ENCODE measurements at regions of chr9 and their contacts with region 1.

Region 1: DNA sequence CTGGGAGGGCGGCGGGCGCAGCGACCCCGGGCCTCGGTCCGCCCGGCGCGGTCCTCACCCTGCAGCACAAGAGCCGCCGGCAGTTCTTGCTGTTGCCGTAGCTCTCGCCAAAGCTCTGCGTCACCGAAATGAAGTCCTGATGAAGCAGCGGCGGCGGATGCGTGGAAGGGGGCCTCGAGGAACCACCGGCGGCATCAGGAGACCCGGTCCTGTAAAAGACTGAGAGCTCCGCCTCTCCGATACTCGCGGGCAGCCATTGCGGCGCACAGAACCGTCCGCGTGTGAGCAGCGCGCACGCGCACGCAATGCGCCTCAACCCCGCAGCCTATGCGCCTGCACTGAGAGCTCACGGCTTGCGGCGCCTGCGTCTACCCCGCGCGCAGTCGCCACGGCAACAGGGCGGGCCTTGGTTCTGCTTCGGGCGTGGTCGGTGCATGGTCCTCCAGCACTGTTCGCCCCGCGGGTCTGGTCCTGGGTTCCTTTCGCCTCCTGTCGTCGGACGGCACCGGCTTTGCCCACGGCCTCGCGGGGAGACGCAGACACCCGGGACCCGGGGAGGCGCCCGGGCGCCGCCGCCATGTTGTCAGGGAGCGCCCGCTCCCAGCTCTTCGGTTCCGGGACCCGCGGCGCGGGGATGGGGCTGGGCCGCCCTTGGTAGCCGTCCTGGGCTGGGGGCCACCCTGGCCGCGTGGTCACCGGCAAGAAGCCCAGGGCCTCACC is 9.3 kb upstream of the GRIN1 start:
- DNase-seq: peak; percentile 94
- ATAC-seq: peak; percentile 93
- H3K4me3 ChIP-seq: peak overlapping the region; percentile 8 to 82 (median 73)
- H3K4me3 Mint-ChIP-seq: peak overlapping the region; percentile 89
- H3K27ac ChIP-seq: peak overlapping the region; percentile 71 to 93
- H3K27ac Mint-ChIP-seq: peak overlapping the region; percentile 91
- H3K4me1 ChIP-seq: peaks cover 28 to 32% of the 10 kb centered on the region in 2 donors
- H3K4me1 Mint-ChIP-seq: peaks cover 31% of the 10 kb centered on the region
- H3K27me3 ChIP-seq: peaks cover 0 to 3% (median 0%) of the 10 kb centered on the region in 4 experiments
- H3K27me3 Mint-ChIP-seq: peaks cover 4% of the 10 kb centered on the region
- CTCF ChIP-seq: no peak

Region 2: DNA sequence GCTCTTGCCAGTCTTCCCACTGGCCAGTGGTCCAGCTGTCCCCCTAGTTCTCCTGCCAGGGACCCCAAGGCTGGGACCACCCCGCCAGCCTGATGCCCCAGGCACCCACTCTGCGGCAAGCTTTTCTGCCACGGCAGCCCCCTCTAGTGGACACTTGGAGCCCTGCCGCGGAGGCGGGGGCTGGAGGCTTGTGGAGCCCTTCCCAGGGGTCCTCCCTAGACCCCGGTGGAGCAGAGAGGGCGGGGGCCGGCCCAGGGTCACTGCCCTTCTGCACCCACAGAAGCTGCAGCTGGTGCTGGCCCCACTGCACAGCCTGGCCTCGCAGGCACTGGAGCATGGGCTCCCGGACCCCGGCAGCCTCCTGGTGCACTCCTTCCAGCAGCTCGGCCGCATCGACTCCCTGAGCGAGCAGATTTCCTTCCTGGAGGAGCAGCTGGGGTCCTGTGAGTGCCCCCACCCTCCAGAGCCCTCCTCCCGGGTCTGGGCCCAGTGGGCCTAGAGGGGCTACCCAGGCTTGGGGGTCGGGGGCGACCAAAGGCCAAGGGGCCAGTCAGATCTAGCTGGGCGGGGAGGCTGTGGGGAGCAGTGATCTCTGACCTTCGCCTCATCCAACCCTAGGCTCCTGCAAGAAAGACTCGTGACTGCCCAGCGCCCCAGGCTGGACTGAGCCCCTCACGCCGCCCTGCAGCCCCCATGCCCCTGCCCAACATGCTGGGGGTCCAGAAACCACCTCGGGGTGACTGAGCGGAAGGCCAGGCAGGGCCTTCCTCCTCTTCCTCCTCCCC is 457.8 kb before region 1 on chr9:
- CTCF ChIA-PET with region 1: no interaction called
- POLR2A ChIA-PET with region 1: interaction called, 19 read pairs
- intact Hi-C with region 1: no loop called
- DNase-seq: peak; percentile 60
- ATAC-seq: peak; percentile 52
- H3K4me3 ChIP-seq: no peak overlapping the region
- H3K4me3 Mint-ChIP-seq: no peak overlapping the region
- H3K27ac ChIP-seq: no peak overlapping the region
- H3K27ac Mint-ChIP-seq: no peak overlapping the region
- H3K4me1 ChIP-seq: peaks cover 0 to 5% of the 10 kb centered on the region in 2 donors
- H3K4me1 Mint-ChIP-seq: peaks cover 3% of the 10 kb centered on the region
- H3K27me3 ChIP-seq: peaks cover 0 to 15% (median 5%) of the 10 kb centered on the region in 4 experiments
- H3K27me3 Mint-ChIP-seq: peaks cover 5% of the 10 kb centered on the region
- CTCF ChIP-seq: peak; percentile 85

Region 3: GRCh38 chr9:137086531-137087408 is 42.8 kb before region 1 on chr9 and contains the start of gene MAN1B1:
- CTCF ChIA-PET with region 1: interaction called, 4 read pairs
- POLR2A ChIA-PET with region 1: interaction called, 3 read pairs
- intact Hi-C with region 1: loop called (anchors 5 kb)
- DNase-seq: peak; percentile 100
- ATAC-seq: peak; percentile 79
- H3K4me3 ChIP-seq: peak within 1 kb of the TSS; percentile 42 to 83 (median 74)
- H3K4me3 Mint-ChIP-seq: peak within 1 kb of the TSS; percentile 97
- H3K27ac ChIP-seq: peak within 1 kb of the TSS; percentile 88 to 97
- H3K27ac Mint-ChIP-seq: peak within 1 kb of the TSS; percentile 98
- H3K4me1 ChIP-seq: peaks cover 18 to 41% of the 10 kb centered on the region in 2 donors
- H3K4me1 Mint-ChIP-seq: peaks cover 40% of the 10 kb centered on the region
- H3K27me3 ChIP-seq: no peaks in the 10 kb centered on the region
- H3K27me3 Mint-ChIP-seq: no peaks in the 10 kb centered on the region
- CTCF ChIP-seq: no peak
- total RNA-seq, gene MAN1B1: 68.4 and 80.9 TPM in 2 replicates

Region 4: DNA sequence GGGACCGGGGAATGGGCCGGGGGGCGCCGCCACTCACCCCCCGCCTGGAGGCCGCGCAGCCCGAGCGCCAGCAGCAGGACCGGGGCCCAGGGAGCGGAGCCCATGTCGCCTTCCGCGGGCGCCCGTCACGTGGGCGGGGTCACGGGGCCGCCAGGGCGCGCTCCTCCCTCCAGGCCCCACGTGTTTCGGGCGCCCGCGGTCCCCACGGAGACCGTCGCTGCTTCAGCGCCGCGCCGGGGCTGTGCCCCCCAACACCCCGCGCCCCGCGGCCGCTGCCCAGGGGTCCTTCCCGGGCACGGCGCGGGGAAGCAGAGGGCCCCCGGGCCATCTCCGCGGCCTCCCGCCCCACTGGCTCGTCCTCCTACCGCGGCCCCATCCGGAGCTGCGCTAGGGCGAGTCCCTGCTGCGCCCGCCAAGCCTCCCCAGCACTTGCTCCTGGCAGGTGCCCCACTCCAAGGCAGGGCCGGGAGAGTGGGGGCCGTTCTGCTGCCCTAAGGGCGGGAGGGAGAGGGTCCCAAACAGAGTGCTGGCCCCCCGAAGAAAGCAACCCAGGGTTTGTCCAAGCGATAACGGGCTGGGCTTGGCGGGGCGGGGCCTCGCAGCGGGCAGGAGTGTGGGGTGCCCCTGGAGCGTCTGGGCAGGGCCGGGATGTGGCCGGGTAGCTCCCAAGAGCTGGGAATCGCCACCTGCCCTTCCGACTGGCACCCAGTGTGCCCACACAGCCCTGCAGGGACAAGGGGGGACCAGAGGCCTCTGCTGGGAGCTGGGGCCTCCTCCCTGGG is 14.8 kb before region 1 on chr9 and contains the start of gene DPP7:
- CTCF ChIA-PET with region 1: interaction called, 10 read pairs
- POLR2A ChIA-PET with region 1: interaction called, 5 read pairs
- intact Hi-C with region 1: no loop called
- DNase-seq: peak; percentile 90
- ATAC-seq: peak; percentile 90
- H3K4me3 ChIP-seq: peak within 1 kb of the TSS; percentile 11 to 79 (median 60)
- H3K4me3 Mint-ChIP-seq: peak within 1 kb of the TSS; percentile 81
- H3K27ac ChIP-seq: peak within 1 kb of the TSS; percentile 55 to 83
- H3K27ac Mint-ChIP-seq: peak within 1 kb of the TSS; percentile 50
- H3K4me1 ChIP-seq: peaks cover 17 to 28% of the 10 kb centered on the region in 2 donors
- H3K4me1 Mint-ChIP-seq: peaks cover 20% of the 10 kb centered on the region
- H3K27me3 ChIP-seq: no peaks in the 10 kb centered on the region
- H3K27me3 Mint-ChIP-seq: no peaks in the 10 kb centered on the region
- CTCF ChIP-seq: no peak
- total RNA-seq, gene DPP7: 324 and 335 TPM in 2 replicates

Region 5: DNA sequence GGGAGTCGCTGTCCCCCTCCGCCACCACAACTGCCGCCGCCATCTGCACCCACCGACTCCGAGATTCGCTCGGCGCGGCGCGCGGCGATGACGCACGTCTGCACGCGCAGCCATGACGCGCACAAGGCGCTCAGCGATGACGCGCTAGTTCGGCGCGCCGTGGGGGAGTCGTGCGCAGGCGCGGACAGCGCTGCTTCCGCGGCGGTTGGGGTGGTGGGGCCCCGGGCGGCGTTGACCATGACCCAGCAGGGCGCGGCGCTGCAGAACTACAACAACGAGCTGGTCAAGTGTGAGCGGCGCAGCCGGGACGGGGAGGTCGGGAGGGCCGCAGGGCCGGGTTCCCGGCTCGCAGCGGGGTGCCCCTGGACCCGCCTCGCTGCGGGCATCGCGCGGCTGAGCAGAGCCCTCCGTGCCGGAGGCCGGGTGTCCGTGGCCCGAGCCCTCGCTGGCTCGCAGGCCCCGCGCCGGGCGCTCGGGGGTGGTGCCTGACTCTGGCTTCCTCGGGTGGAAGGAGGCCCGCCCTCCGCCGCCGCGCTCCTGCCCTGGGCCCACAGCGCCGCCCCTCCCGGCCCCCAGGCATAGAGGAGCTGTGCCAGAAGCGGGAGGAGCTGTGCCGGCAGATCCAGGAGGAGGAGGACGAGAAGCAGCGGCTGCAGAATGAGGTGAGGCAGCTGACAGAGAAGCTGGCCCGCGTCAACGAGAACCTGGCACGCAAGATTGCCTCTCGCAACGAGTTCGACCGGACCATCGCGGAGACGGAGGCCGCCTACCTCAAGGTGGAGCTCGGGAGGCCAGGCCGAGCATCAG is 59.1 kb after region 1 on chr9 and contains the starts of genes ANAPC2 and SSNA1:
- CTCF ChIA-PET with region 1: interaction called, 3 read pairs
- POLR2A ChIA-PET with region 1: interaction called, 21 read pairs
- intact Hi-C with region 1: loop called (anchors 5 kb)
- DNase-seq: peak; percentile 97
- ATAC-seq: peak; percentile 84
- H3K4me3 ChIP-seq: peak within 1 kb of the TSS; percentile 50 to 99 (median 98)
- H3K4me3 Mint-ChIP-seq: peak within 1 kb of the TSS; percentile 96
- H3K27ac ChIP-seq: peak within 1 kb of the TSS; percentile 78 to 90
- H3K27ac Mint-ChIP-seq: peak within 1 kb of the TSS; percentile 97
- H3K4me1 ChIP-seq: peaks cover 26 to 40% of the 10 kb centered on the region in 2 donors
- H3K4me1 Mint-ChIP-seq: peaks cover 36% of the 10 kb centered on the region
- H3K27me3 ChIP-seq: no peaks in the 10 kb centered on the region
- H3K27me3 Mint-ChIP-seq: no peaks in the 10 kb centered on the region
- CTCF ChIP-seq: peak; percentile 49
- total RNA-seq, gene ANAPC2: 121 and 129 TPM in 2 replicates
- total RNA-seq, gene SSNA1: 52.9 and 53.6 TPM in 2 replicates

Region 6: DNA sequence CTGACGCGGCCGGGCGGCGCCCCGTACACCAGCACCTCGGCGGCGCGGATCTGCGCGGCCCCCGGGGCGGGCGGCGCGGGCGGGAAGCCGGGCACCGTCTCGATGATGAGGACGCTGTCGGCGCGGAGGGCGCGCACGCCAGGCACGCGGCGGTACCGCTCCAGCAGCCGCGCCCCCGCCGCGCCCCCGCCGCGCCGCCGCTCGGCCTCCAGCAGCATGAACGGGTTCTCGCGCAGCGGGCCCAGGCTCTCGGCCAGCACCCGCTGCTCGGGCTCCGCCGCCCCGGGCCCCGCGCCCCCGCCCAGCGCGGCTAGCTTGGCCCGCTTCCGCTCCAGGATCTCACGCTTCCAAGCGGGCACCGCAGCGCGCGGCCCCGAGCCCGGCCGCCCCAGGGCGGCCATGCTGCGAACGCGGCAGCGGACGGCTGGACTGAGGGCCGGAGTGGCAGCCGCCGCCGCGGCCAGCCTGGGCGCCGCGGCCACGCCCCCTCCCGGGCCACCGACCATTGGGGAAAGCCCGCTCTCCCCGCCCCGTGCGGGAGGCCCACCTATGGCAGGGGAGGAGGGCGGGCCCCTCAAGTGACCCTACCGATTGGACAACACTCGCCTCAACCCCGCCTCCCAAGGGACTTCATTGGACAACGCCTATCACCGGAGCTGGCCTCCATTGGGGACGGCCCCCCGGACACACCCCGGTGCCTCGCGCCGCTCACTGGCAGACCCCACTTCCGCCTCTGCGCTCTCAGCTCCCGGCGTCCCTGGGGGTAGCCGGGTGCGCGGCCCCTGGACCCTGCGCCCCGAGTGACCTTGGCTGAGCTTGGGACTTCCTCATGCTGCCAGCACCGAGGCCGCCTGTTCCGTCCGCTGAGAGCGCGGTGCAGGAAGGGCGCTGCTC is 70.9 kb after region 1 on chr9 and contains the start of gene TPRN:
- CTCF ChIA-PET with region 1: no interaction called
- POLR2A ChIA-PET with region 1: interaction called, 4 read pairs
- intact Hi-C with region 1: loop called (anchors 2 kb)
- DNase-seq: peak; percentile 99
- ATAC-seq: peak; percentile 95
- H3K4me3 ChIP-seq: peak within 1 kb of the TSS; percentile 12 to 80 (median 75)
- H3K4me3 Mint-ChIP-seq: peak within 1 kb of the TSS; percentile 88
- H3K27ac ChIP-seq: peak within 1 kb of the TSS; percentile 78 to 89
- H3K27ac Mint-ChIP-seq: peak within 1 kb of the TSS; percentile 90
- H3K4me1 ChIP-seq: peaks cover 31 to 41% of the 10 kb centered on the region in 2 donors
- H3K4me1 Mint-ChIP-seq: peaks cover 29% of the 10 kb centered on the region
- H3K27me3 ChIP-seq: peaks cover 0 to 6% (median 0%) of the 10 kb centered on the region in 4 experiments
- H3K27me3 Mint-ChIP-seq: no peaks in the 10 kb centered on the region
- CTCF ChIP-seq: no peak
- total RNA-seq, gene TPRN: 16.3 and 19.3 TPM in 2 replicates

Region 7: GRCh38 chr9:137353223-137354152 is 223.9 kb after region 1 on chr9:
- CTCF ChIA-PET with region 1: no interaction called
- POLR2A ChIA-PET with region 1: no interaction called
- intact Hi-C with region 1: no loop called
- DNase-seq: no peak
- ATAC-seq: no peak
- H3K4me3 ChIP-seq: no peak overlapping the region
- H3K4me3 Mint-ChIP-seq: no peak overlapping the region
- H3K27ac ChIP-seq: no peak overlapping the region
- H3K27ac Mint-ChIP-seq: no peak overlapping the region
- H3K4me1 ChIP-seq: no peaks in the 10 kb centered on the region
- H3K4me1 Mint-ChIP-seq: no peaks in the 10 kb centered on the region
- H3K27me3 ChIP-seq: no peaks in the 10 kb centered on the region
- H3K27me3 Mint-ChIP-seq: no peaks in the 10 kb centered on the region
- CTCF ChIP-seq: no peak